B cell (primary cell): ENCODE measurements at regions of chr10 and their contacts with region 1.

Region 1: GRCh38 chr10:72297968-72298773 is 24.4 kb downstream of the DDIT4 start:
- DNase-seq: peak; percentile 96
- ATAC-seq: peak; percentile 71
- H3K4me3 ChIP-seq: peak overlapping the region in 4 of 5 experiments; percentile 74 to 90 (median 86)
- H3K4me3 Mint-ChIP-seq: peak overlapping the region; percentile 92
- H3K27ac ChIP-seq: peak overlapping the region; percentile 99 to 100
- H3K27ac Mint-ChIP-seq: peak overlapping the region; percentile 99
- H3K4me1 ChIP-seq: peaks cover 27 to 38% of the 10 kb centered on the region in 2 donors
- H3K4me1 Mint-ChIP-seq: peaks cover 56% of the 10 kb centered on the region
- H3K27me3 ChIP-seq: no peaks in the 10 kb centered on the region
- H3K27me3 Mint-ChIP-seq: no peaks in the 10 kb centered on the region
- CTCF ChIP-seq: no peak

Region 2: DNA sequence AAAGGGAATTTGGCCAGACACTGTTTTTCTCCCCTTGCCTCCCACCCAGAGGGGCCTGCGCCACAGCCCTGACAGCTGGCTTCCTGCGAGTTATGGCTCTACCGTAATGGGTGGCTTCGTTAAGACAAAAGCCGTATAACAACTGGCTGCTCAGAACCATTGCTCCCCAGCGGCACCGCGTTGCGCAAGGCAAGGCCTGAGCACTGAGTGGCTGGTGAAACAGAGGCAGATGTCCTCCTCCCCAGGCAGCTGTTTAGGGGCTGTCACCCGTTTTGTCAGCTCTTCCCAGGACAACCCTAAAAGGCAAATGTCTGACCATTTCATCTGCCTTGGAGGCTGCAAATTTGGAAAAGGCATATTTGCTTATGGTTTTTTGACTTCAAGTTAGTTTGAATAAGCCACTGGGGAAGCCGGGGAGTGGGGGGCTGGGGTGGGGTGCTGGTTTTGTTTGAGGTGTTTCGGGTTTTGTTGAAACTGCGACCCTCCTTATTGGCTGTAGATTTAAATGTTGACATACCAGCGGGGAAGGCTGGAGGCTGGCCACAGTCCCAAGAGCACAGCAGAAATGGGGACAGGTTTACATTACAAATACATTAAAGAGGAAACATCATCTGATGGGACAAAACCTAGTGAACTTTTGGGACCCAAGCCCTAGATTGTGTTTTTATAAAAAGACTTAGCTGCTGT is 209.1 kb before region 1 on chr10:
- CTCF ChIA-PET with region 1: no interaction called
- POLR2A ChIA-PET with region 1: interaction called, 20 read pairs
- intact Hi-C with region 1: no loop called
- DNase-seq: no peak
- ATAC-seq: no peak
- H3K4me3 ChIP-seq: peak overlapping the region in 4 of 5 experiments; percentile 79 to 93 (median 88)
- H3K4me3 Mint-ChIP-seq: peak overlapping the region; percentile 100
- H3K27ac ChIP-seq: peak overlapping the region; percentile 89 to 92
- H3K27ac Mint-ChIP-seq: peak overlapping the region; percentile 100
- H3K4me1 ChIP-seq: peaks cover 24 to 33% of the 10 kb centered on the region in 2 donors
- H3K4me1 Mint-ChIP-seq: peaks cover 47% of the 10 kb centered on the region
- H3K27me3 ChIP-seq: no peaks in the 10 kb centered on the region
- H3K27me3 Mint-ChIP-seq: no peaks in the 10 kb centered on the region
- CTCF ChIP-seq: no peak

Region 3: GRCh38 chr10:72260588-72261322 is 37.4 kb before region 1 on chr10:
- CTCF ChIA-PET with region 1: no interaction called
- POLR2A ChIA-PET with region 1: interaction called, 19 read pairs
- intact Hi-C with region 1: loop called (anchors 1 kb)
- DNase-seq: peak; percentile 81
- ATAC-seq: peak; percentile 81
- H3K4me3 ChIP-seq: peak overlapping the region; percentile 51 to 80 (median 73)
- H3K4me3 Mint-ChIP-seq: peak overlapping the region; percentile 94
- H3K27ac ChIP-seq: peak overlapping the region; percentile 47 to 67
- H3K27ac Mint-ChIP-seq: peak overlapping the region; percentile 89
- H3K4me1 ChIP-seq: peaks cover 48 to 68% of the 10 kb centered on the region in 2 donors
- H3K4me1 Mint-ChIP-seq: peaks cover 51% of the 10 kb centered on the region
- H3K27me3 ChIP-seq: no peaks in the 10 kb centered on the region
- H3K27me3 Mint-ChIP-seq: no peaks in the 10 kb centered on the region
- CTCF ChIP-seq: no peak

Region 4: GRCh38 chr10:72319416-72320254 is 21.5 kb after region 1 on chr10:
- CTCF ChIA-PET with region 1: interaction called, 29 read pairs
- POLR2A ChIA-PET with region 1: interaction called, 140 read pairs
- intact Hi-C with region 1: loop called (anchors 1 kb)
- DNase-seq: peak; percentile 92
- ATAC-seq: peak; percentile 65
- H3K4me3 ChIP-seq: peak overlapping the region in 4 of 5 experiments; percentile 49 to 68 (median 58)
- H3K4me3 Mint-ChIP-seq: peak overlapping the region; percentile 88
- H3K27ac ChIP-seq: peak overlapping the region; percentile 94 to 95
- H3K27ac Mint-ChIP-seq: peak overlapping the region; percentile 99
- H3K4me1 ChIP-seq: peaks cover 78 to 91% of the 10 kb centered on the region in 2 donors
- H3K4me1 Mint-ChIP-seq: peaks cover 78% of the 10 kb centered on the region
- H3K27me3 ChIP-seq: no peaks in the 10 kb centered on the region
- H3K27me3 Mint-ChIP-seq: no peaks in the 10 kb centered on the region
- CTCF ChIP-seq: no peak

Region 5: GRCh38 chr10:72337020-72337629 is 39.0 kb after region 1 on chr10:
- CTCF ChIA-PET with region 1: interaction called, 27 read pairs
- POLR2A ChIA-PET with region 1: interaction called, 68 read pairs
- intact Hi-C with region 1: loop called (anchors 1 kb)
- DNase-seq: peak; percentile 78
- ATAC-seq: no peak
- H3K4me3 ChIP-seq: no peak overlapping the region
- H3K4me3 Mint-ChIP-seq: no peak overlapping the region
- H3K27ac ChIP-seq: no peak overlapping the region
- H3K27ac Mint-ChIP-seq: peak overlapping the region; percentile 27
- H3K4me1 ChIP-seq: peaks cover 51 to 61% of the 10 kb centered on the region in 2 donors
- H3K4me1 Mint-ChIP-seq: peaks cover 60% of the 10 kb centered on the region
- H3K27me3 ChIP-seq: no peaks in the 10 kb centered on the region
- H3K27me3 Mint-ChIP-seq: no peaks in the 10 kb centered on the region
- CTCF ChIP-seq: peak; percentile 98

Region 6: DNA sequence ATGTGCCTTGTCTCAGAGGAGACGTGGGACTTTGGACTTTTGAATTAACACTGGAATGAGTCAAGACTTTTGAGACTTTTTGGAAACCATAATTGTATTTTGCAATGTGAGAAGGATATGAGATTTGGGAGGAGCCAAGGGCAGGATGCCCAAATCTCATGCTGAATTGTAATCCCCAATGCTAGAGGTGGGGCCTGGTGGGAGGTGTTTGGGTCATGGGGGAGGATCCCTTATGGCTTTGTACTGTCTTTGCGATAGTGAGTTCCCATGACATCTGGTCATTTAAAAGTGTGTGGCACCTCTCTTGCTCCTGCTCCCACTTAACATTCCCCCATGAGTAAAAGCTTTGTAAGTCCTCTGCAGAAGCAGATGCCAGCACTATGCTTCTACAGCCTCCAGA is 909.7 kb after region 1 on chr10:
- CTCF ChIA-PET with region 1: no interaction called
- POLR2A ChIA-PET with region 1: no interaction called
- intact Hi-C with region 1: no loop called
- DNase-seq: no peak
- ATAC-seq: no peak
- H3K4me3 ChIP-seq: no peak overlapping the region
- H3K4me3 Mint-ChIP-seq: no peak overlapping the region
- H3K27ac ChIP-seq: no peak overlapping the region
- H3K27ac Mint-ChIP-seq: no peak overlapping the region
- H3K4me1 ChIP-seq: no peaks in the 10 kb centered on the region
- H3K4me1 Mint-ChIP-seq: no peaks in the 10 kb centered on the region
- H3K27me3 ChIP-seq: no peaks in the 10 kb centered on the region
- H3K27me3 Mint-ChIP-seq: no peaks in the 10 kb centered on the region
- CTCF ChIP-seq: no peak